Activated CD4-positive, alpha-beta T cell treated with anti-CD3 and anti-CD28 coated beads for 36 hours (primary cell): ENCODE measurements at regions of chr9 and their contacts with region 1.

Region 1: DNA sequence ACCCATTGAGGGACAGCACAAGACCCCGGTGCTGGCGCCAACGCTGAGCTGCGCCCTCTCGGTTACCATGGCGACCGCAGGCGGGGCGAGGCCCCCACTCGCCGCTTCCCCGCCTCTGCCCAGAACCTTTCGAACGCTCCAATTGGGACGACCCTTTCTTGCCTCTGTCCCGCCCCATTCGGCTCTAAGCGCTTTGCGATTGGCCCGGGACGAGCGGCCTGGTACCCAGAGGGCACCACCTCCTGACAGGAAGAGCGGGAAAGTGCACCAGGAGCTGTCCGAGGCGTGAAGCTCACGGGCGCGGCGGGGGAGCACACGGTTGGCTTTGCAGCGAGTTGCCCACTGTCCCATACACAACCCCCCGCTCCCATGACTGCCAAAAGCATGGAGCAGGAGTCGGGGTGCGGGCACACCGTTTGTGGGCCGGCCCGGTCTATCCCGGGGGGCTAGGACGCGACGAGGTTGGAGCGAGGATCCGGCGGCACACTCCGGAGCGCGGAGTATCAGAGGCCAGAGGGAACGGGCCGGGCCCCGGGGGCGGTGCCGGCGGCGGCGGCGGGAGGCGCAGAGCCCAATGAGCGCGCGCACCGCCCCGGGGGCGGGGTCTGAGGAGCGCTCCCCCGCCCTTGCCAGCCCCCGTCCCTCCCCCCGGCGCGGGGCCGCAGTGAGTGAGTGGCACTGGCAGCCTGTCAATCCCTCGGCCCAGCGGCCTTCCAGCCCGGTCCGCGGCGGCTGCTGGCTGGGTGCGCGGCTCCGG is 978 bp upstream of the PBX3 start:
- DNase-seq: peak; percentile 96
- ATAC-seq: peak; percentile 85
- H3K4me3 Mint-ChIP-seq: peak overlapping the region; percentile 82
- H3K27ac Mint-ChIP-seq: peak overlapping the region; percentile 94
- H3K4me1 Mint-ChIP-seq: peaks cover 21% of the 10 kb centered on the region
- H3K27me3 Mint-ChIP-seq: peaks cover 12% of the 10 kb centered on the region

Region 2: DNA sequence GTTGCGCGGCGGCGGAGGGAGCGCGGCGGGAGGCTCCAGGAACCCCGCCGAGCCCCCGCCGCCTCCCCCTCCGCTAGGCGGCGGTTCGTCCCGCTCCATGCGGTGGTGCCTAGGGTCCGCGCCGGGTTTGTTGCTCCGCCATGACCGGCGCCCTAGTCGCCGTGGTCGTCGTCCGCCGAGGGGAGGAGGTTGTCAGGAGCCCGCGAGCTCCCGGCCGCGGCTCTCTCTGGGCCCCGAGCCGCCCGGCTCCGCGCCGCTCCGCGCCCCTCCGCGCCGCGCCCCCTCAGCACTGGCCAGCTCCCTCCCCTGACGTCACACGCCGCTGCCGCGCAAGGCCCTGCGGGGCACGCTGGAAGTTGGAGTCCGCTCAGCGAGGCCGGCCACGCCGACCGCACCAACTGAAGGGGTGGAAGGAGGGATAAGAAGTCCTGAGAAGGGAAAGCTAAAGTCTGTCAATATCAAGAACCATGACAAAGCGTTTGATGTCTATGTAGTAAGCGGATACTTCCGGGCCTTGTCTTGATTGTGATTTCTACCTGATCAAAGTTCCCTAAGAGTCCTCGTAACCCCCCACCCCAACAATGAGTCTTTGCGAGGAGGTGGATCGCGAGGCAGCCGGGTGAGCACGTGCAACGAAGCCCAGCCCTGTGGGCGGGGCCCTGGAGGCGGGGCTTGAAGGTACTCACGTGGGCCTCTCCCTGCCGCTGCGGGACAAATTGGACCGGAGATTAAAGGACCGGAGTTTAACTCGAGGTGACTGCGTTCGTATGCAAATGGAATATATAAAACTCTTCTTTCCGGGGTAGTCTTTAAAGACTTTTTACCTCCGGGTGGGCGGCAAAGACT is 975.0 kb before region 1 on chr9 and contains the start of gene NR6A1:
- CTCF ChIA-PET with region 1: no interaction called
- POLR2A ChIA-PET with region 1: no interaction called
- intact Hi-C with region 1: loop called in 1 of 2 experiments (anchors 1 kb)
- DNase-seq: peak; percentile 97
- ATAC-seq: peak; percentile 90
- H3K4me3 Mint-ChIP-seq: peak within 1 kb of the TSS; percentile 80
- H3K27ac Mint-ChIP-seq: peak within 1 kb of the TSS; percentile 74
- H3K4me1 Mint-ChIP-seq: peaks cover 29% of the 10 kb centered on the region
- H3K27me3 Mint-ChIP-seq: peaks cover 62% of the 10 kb centered on the region
- total RNA-seq, gene NR6A1: 0.82 to 1.1 TPM

Region 3: DNA sequence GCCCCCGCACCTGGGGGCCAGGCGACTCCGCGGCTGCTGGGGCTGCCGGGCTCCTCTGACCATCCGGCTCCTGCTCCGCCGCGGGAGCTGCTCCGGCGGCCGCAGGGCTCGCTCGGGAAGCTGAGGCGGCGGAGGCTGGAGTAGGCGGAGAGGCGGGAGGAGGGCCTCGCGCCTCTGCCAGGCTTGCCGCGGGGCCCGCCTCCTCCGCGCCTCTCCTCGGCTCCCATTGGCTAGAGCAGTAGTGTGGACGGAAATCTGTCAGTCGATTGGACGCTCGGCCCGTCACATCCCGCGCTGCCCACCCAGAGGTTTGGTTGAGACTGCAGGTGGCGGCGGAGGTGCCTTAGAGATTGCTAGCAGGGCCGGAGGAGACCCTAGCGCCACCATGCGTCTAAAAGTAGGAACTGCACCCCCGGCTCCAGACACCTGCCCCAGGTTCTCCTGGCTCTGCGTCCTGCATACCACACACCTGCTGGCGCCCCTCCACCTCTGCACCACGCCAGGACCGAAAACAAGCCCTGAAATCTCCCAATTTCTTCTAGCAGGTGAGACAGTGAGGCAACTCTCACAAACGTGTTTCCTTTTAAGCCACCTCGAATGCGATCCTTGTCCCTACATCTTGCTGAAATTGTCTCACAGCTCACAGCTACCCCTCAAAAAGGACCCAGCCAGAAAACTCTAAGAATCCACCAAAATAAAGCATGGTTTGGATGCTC is 602.7 kb before region 1 on chr9 and contains the start of gene SCAI:
- CTCF ChIA-PET with region 1: no interaction called
- POLR2A ChIA-PET with region 1: no interaction called
- intact Hi-C with region 1: loop called in 1 of 2 experiments (anchors 1 kb)
- DNase-seq: peak; percentile 99
- ATAC-seq: peak; percentile 100
- H3K4me3 Mint-ChIP-seq: peak within 1 kb of the TSS; percentile 83
- H3K27ac Mint-ChIP-seq: peak within 1 kb of the TSS; percentile 69
- H3K4me1 Mint-ChIP-seq: peaks cover 35% of the 10 kb centered on the region
- H3K27me3 Mint-ChIP-seq: no peaks in the 10 kb centered on the region
- total RNA-seq, gene SCAI: 13.0 to 13.8 TPM

Region 4: DNA sequence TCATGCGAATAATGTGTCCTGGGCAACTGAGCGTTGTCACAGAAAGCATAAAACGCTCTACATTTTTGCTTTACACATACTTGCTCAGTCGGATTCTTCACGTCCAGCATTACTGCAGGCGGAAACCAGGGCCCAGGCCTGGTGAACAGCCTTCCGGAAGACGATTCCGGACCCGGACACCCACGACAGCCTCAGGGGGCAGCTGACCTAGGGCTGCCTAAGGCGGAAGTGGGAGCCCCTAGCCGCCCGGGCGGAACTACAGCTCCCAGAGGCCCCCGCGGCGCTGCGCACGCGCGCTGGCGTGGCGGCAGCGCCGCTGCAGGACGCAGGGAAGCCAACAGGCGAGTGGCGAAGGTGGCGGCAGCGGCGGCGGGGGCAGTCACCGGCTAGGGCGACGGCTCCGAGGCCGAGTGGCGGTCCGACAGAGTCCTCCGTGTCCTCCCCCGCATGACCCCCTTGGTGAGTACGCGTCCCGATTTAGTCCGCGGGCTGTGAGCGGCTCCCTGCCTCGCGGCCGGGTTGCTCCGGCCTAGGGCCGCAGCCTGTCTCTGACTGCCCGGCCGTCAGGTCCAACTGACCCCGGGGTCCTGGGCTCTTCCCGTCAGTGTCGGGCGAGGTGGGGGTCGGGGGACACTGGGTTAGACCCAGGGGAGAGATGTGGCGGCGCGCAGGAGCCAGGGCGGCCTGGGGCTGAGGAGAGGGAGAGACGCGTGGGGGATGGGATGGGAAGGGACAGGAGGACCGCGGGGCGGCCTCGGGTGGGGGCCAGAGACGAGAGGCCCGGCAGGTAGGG is 484.5 kb before region 1 on chr9 and contains the start of gene GAPVD1:
- CTCF ChIA-PET with region 1: no interaction called
- POLR2A ChIA-PET with region 1: no interaction called
- intact Hi-C with region 1: loop called in 1 of 2 experiments (anchors 1 kb)
- DNase-seq: peak; percentile 94
- ATAC-seq: peak; percentile 99
- H3K4me3 Mint-ChIP-seq: peak within 1 kb of the TSS; percentile 99
- H3K27ac Mint-ChIP-seq: peak within 1 kb of the TSS; percentile 96
- H3K4me1 Mint-ChIP-seq: peaks cover 43% of the 10 kb centered on the region
- H3K27me3 Mint-ChIP-seq: no peaks in the 10 kb centered on the region
- total RNA-seq, gene GAPVD1: 41.6 to 47.7 TPM

Region 5: DNA sequence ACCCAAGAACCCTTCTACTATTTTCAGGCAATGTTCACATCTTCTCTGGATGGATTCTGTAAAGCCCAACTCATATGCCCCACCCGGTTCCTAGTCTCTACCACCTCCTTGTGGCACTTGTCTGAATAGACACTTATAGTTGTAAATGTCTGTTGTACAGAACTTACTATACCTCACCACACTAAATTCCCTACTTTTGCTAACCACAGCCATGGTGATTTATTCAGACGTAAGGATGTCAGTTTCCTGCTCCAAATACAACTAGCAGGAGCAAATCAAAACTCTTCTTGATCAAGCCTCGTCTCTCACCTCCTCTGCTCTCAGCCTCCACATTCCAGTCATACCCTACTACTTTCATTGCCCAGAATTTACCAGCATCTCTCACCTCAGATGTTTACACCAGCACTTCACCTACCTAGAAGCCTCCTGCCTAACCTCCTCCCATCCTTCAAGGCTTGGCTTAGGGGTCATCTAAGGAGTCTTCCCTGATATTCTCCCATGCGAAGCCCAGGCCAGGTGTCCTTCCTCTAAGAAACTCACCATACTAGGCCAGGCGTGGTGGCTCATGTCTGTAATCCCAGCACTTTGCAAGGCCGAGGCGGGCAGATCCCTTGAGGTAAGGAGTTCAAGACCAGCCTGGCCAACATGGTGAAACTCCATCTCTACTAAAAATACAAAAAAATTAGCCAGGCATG is 114.7 kb before region 1 on chr9:
- CTCF ChIA-PET with region 1: no interaction called
- POLR2A ChIA-PET with region 1: no interaction called
- intact Hi-C with region 1: loop called (anchors 1 kb)
- DNase-seq: peak; percentile 59
- ATAC-seq: peak; percentile 51
- H3K4me3 Mint-ChIP-seq: no peak overlapping the region
- H3K27ac Mint-ChIP-seq: peak overlapping the region; percentile 26
- H3K4me1 Mint-ChIP-seq: peaks cover 83% of the 10 kb centered on the region
- H3K27me3 Mint-ChIP-seq: no peaks in the 10 kb centered on the region

Region 6: GRCh38 chr9:125829743-125830142 is 83.5 kb after region 1 on chr9:
- CTCF ChIA-PET with region 1: no interaction called
- POLR2A ChIA-PET with region 1: interaction called, 3 read pairs
- intact Hi-C with region 1: loop called (anchors 2 to 5 kb)
- DNase-seq: peak; percentile 70
- ATAC-seq: peak; percentile 97
- H3K4me3 Mint-ChIP-seq: peak overlapping the region; percentile 72
- H3K27ac Mint-ChIP-seq: peak overlapping the region; percentile 78
- H3K4me1 Mint-ChIP-seq: peaks cover 26% of the 10 kb centered on the region
- H3K27me3 Mint-ChIP-seq: no peaks in the 10 kb centered on the region

Region 7: GRCh38 chr9:126722252-126723078 is 976.3 kb after region 1 on chr9:
- CTCF ChIA-PET with region 1: no interaction called
- POLR2A ChIA-PET with region 1: no interaction called
- intact Hi-C with region 1: loop called in 1 of 2 experiments (anchors 2 kb)
- DNase-seq: peak; percentile 96
- ATAC-seq: peak; percentile 73
- H3K4me3 Mint-ChIP-seq: peak overlapping the region; percentile 77
- H3K27ac Mint-ChIP-seq: peak overlapping the region; percentile 89
- H3K4me1 Mint-ChIP-seq: peaks cover 43% of the 10 kb centered on the region
- H3K27me3 Mint-ChIP-seq: no peaks in the 10 kb centered on the region